GM10248 (cell line): ENCODE measurements at regions of chr15 and their contacts with region 1.

Region 1: GRCh38 chr15:65638681-65639089 is 16.9 kb downstream of the SLC24A1 start:
- DNase-seq: peak; percentile 73
- CTCF ChIP-seq: peak; percentile 80

Region 2: GRCh38 chr15:65558336-65558735 is 80.3 kb before region 1 on chr15:
- CTCF ChIA-PET with region 1: no interaction called
- POLR2A ChIA-PET with region 1: no interaction called
- DNase-seq: no peak
- CTCF ChIP-seq: no peak

Region 3: GRCh38 chr15:65620833-65621232 is 17.9 kb before region 1 on chr15:
- CTCF ChIA-PET with region 1: interaction called, 52 read pairs
- POLR2A ChIA-PET with region 1: no interaction called
- DNase-seq: no peak
- CTCF ChIP-seq: no peak

Region 4: GRCh38 chr15:65660927-65661326 is 22.2 kb after region 1 on chr15:
- CTCF ChIA-PET with region 1: interaction called, 15 read pairs
- POLR2A ChIA-PET with region 1: no interaction called
- DNase-seq: no peak
- CTCF ChIP-seq: no peak

Region 5: GRCh38 chr15:65832549-65833364 is 194.1 kb after region 1 on chr15:
- CTCF ChIA-PET with region 1: interaction called, 45 read pairs
- POLR2A ChIA-PET with region 1: no interaction called
- DNase-seq: peak; percentile 32
- CTCF ChIP-seq: no peak

Region 6: GRCh38 chr15:65862682-65863081 is 224.0 kb after region 1 on chr15:
- CTCF ChIA-PET with region 1: interaction called, 34 read pairs
- POLR2A ChIA-PET with region 1: no interaction called
- DNase-seq: peak; percentile 65
- CTCF ChIP-seq: peak; percentile 45